ENCODE measurements at regions of chr3 and their contacts with region 1.

Region 1: DNA sequence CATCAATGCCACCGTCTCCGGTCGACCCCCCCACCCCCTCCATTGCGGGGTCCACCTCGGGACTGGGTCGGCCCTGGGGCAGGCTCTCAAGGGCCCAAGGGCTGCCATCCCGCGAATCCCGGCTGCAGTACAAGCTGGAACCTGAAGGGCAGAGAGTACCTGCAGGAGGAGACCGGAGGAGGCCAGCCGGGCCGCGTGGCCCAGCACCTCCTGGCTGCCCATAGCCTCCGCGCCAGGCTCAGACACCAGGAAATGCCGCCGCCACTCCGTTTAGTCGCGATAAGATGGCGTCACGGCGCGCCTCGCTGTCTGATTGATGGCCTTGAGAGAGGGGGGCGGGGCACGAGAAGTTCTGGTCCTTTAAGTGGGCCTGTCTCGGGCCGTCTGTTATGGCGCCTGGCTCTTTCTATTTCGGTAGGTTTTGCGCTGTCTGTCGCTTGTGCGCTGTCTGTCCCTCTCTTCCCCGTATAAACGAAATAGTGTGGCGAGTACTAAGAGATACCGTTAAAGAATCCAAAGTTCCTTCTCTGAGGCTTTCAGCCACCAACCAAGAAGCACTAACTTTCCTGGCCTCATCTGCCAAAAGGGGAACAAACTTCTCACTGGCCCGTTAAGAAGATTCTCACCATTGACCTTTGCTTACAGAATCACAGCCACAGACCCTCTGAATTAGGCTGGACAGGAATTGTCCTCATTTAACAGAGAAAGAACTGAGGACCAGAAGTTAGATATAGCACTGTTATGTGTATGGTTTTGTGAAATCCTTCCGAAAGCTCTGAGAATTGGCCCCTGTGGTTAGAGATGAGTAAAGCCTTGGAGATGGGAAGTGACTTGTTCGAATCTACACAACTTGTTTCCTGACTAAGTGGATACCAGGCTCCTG is at the start of gene RFT1:
- DNase-seq: peak; percentile 99
- ATAC-seq: peak; percentile 92 to 95 (median 94)
- H3K4me3 ChIP-seq: peak within 1 kb of the TSS; percentile 77
- H3K27ac ChIP-seq: peak within 1 kb of the TSS; percentile 91
- H3K4me1 ChIP-seq: peaks cover 30% of the 10 kb centered on the region
- H3K27me3 ChIP-seq: no peaks in the 10 kb centered on the region
- CTCF ChIP-seq: no peak
- total RNA-seq, gene RFT1: 5.7 to 8.8 (median 6.5) TPM

Region 2: DNA sequence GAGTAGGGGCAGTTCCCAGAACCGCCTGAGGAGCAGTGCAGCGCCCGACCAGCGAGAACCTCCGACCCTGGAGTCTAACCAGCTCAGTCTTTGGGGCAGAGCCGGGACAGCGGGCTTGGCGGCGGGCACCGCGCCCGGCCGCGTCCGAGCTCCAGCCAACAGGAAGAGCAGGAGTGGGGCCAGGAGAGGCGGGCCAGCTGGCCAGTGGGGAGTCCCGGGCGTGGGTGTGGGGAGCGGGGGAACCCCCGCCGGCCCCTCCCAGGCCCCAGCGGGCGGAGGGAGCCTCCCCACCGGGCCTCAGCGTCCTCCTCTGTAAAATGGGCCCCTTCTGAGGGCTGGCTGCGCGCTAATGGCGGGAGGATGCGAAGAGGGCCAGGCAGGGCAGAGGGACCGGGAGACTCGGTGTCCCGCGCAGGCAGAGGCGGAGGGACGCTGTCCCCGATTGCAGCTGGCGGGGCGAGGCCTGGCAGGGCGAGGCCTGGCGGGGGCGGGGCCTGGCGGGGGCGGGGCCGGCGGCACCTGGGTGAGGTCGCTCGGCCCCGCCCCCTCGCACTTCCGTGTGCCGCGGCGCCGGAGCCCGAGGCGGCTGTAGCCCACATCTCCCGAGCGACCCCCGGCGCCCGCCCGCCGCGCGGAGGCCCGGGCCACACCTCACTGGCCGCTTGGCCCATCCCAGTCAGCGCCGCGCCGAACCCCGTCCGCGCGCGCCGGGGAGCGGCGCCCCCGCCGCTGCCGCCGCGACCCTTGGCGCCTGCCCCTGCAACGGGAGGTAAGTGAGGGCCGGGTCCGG is 30.4 kb after region 1 on chr3 and contains the start of gene PRKCD:
- intact Hi-C with region 1: loop called in 1 of 2 experiments (anchors 5 kb)
- DNase-seq: peak; percentile 86 to 93
- ATAC-seq: peak; percentile 83 to 93 (median 91)
- H3K4me3 ChIP-seq: peak within 1 kb of the TSS; percentile 72
- H3K27ac ChIP-seq: peak within 1 kb of the TSS; percentile 85
- H3K4me1 ChIP-seq: peaks cover 12% of the 10 kb centered on the region
- H3K27me3 ChIP-seq: no peaks in the 10 kb centered on the region
- CTCF ChIP-seq: peak; percentile 48
- total RNA-seq, gene PRKCD: 3.2 to 8.4 (median 4.5) TPM

Region 3: GRCh38 chr3:53604232-53604631 is 473.8 kb after region 1 on chr3:
- intact Hi-C with region 1: no loop called
- DNase-seq: no peak
- ATAC-seq: no peak
- H3K4me3 ChIP-seq: no peak overlapping the region
- H3K27ac ChIP-seq: no peak overlapping the region
- H3K4me1 ChIP-seq: no peaks in the 10 kb centered on the region
- H3K27me3 ChIP-seq: peaks cover 0 to 5% (median 2%) of the 10 kb centered on the region in 3 donors
- CTCF ChIP-seq: no peak

Measured in psoas muscle (tissue), 8 donors.